ENCODE measurements at regions of chr9 and their contacts with region 1.

Region 1: GRCh38 chr9:132283863-132284262 is 70.9 kb downstream of the SETX start:
- DNase-seq: no peak
- H3K4me3 ChIP-seq: no peak overlapping the region
- H3K27ac ChIP-seq: no peak overlapping the region
- H3K27me3 ChIP-seq: no peaks in the 10 kb centered on the region
- CTCF ChIP-seq: no peak

Region 2: DNA sequence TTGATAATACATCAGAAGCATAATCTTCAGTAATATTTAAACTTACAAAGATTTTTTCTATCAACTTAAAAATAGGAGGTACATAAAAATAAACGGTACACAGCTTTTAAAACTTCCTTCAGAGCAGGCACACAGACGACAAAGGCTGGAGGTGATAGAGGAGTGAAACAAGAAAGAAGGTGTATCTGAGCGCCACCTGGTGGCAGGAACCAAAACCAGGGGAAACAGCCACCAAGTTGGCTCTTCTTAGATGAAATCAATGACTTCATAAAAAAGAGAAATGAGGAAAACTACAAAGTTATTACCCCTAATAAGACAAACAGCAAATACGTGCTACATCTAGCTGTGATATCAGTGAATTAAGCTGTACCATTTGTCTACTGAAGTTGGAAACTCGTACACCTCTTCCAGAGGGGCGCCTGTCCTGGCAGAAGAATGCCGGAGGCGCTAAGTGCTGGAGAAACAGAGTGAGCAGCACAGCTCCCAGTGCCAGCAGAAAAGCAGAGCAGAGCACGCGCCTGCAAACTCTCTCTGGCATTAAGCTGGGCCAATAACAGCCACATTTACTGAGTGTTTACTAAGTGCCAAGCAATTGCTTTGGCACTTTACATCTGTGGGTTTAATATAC is 15.0 kb before region 1 on chr9:
- CTCF ChIA-PET with region 1: interaction called, 26 read pairs
- POLR2A ChIA-PET with region 1: no interaction called
- DNase-seq: peak; percentile 32
- H3K4me3 ChIP-seq: no peak overlapping the region
- H3K27ac ChIP-seq: no peak overlapping the region
- H3K27me3 ChIP-seq: no peaks in the 10 kb centered on the region
- CTCF ChIP-seq: peak; percentile 92